ENCODE measurements at regions of chr20 and their contacts with region 1.

Region 1: DNA sequence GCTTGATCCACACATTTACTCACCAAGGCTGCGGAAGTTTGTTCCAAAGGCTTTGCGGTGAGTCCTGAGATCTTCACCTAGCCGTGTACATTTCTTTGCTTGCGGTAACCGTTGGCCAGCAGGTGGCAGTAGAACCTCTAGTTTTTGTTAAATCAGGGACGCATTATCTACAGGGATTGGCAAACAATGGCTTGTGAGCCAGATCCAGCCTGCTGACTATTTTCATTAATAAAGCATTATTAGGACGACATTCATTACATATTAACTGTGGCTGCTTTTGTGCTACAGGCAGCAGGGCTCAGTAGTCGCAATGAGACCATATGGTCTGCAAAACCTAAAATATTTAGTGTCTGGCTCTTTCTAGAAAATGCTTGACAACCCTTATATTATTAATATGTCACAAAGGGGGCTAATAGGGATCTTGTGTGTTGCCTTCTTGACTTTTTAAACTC is 174.1 kb downstream of the DOK5 start:
- DNase-seq: no peak
- H3K4me3 ChIP-seq: no peak overlapping the region
- H3K27ac ChIP-seq: no peak overlapping the region
- H3K4me1 ChIP-seq: peaks cover 0 to 7% (median 0%) of the 10 kb centered on the region in 3 donors
- H3K27me3 ChIP-seq: no peaks in the 10 kb centered on the region
- CTCF ChIP-seq: peak; percentile 18 to 80 (median 71)
- POLR2A ChIP-seq: no peak

Region 2: GRCh38 chr20:54219751-54220426 is 429.6 kb before region 1 on chr20:
- intact Hi-C with region 1: loop called (anchors 5 kb)
- DNase-seq: no peak
- H3K4me3 ChIP-seq: no peak overlapping the region
- H3K27ac ChIP-seq: no peak overlapping the region
- H3K4me1 ChIP-seq: peaks cover 0 to 4% (median 0%) of the 10 kb centered on the region in 3 donors
- H3K27me3 ChIP-seq: no peaks in the 10 kb centered on the region
- CTCF ChIP-seq: peak in 5 of 6 experiments; percentile 36 to 61 (median 38)
- POLR2A ChIP-seq: no peak